H1 (cell line): ENCODE measurements at regions of chr1 and their contacts with region 1.

Region 1: DNA sequence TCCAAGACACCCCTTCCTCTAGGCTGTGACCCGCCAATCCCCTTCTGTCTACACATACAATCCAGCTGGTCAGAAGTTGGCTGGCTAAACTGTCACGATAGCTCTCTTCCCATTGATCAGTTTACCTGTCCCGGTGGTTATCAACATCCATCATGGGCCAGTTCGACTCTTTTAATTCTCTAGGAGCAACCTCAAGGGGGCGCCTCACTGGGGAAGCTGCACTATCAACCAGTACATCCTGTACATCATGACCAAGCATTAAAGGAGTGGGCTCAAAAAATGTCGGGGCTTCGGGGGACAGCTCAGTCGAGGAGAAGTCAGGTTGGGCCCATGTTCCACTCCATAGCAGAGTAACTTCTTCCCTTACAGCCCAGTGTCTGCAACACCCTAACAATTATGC is 53.2 kb upstream of the B3GALNT2 start:
- DNase-seq: peak in 1 of 2 experiments; percentile 83
- H3K4me3 ChIP-seq: no peak overlapping the region
- H3K27ac ChIP-seq: no peak overlapping the region
- H3K4me1 ChIP-seq: no peaks in the 10 kb centered on the region
- H3K27me3 ChIP-seq: no peaks in the 10 kb centered on the region
- CTCF ChIP-seq: peak; percentile 48 to 74 (median 74)
- EP300 ChIP-seq: no peak
- POLR2A ChIP-seq: no peak
- RAD21 ChIP-seq: peak; percentile 42 to 55

Region 2: DNA sequence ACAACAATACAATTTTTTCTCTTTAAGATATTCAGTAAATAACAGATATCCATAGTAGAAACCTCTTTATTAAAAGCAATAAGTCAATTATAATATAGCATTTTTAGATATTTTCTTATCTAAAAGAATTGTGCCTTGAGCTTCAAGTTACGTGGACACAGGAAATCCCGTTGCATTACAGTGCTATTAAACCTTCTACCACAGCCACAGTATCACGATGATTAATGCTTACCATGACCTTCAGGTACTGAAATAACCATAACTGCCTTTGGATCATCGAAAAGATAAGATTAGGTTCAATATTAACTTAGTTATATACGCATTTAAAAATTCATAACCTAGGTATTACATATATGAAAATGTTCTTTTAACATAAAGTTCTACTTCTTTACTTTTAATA is 71.2 kb before region 1 on chr1:
- CTCF ChIA-PET with region 1: no interaction called
- POLR2A ChIA-PET with region 1: no interaction called
- DNase-seq: no peak
- H3K4me3 ChIP-seq: no peak overlapping the region
- H3K27ac ChIP-seq: no peak overlapping the region
- H3K4me1 ChIP-seq: no peaks in the 10 kb centered on the region
- H3K27me3 ChIP-seq: no peaks in the 10 kb centered on the region
- CTCF ChIP-seq: no peak
- EP300 ChIP-seq: no peak
- POLR2A ChIP-seq: no peak
- RAD21 ChIP-seq: no peak

Region 3: DNA sequence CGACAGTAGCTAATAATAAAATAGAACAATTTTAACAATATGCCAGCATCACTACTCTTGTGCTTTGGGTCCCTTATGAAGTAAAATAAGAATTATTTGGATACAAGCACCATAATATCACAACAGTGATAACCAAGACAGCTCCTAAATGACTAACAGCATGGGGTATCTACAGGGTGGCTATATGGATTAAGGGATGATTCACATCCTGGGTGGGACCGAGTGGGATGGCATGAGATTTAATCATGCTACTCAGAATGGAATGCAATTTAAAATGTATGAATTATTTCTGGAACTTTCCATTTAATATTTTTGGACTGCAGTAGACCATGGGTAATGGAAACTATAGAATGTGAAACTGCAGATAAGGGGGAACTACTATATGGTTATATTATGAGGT is 25.1 kb before region 1 on chr1:
- CTCF ChIA-PET with region 1: interaction called, 12 read pairs
- POLR2A ChIA-PET with region 1: interaction called, 4 read pairs
- DNase-seq: no peak
- H3K4me3 ChIP-seq: no peak overlapping the region
- H3K27ac ChIP-seq: no peak overlapping the region
- H3K4me1 ChIP-seq: no peaks in the 10 kb centered on the region
- H3K27me3 ChIP-seq: no peaks in the 10 kb centered on the region; a peak in 1 of 7 replicates
- CTCF ChIP-seq: no peak
- EP300 ChIP-seq: no peak
- POLR2A ChIP-seq: no peak
- RAD21 ChIP-seq: no peak

Region 4: GRCh38 chr1:235545277-235545930 is 12.1 kb before region 1 on chr1:
- CTCF ChIA-PET with region 1: interaction called, 55 read pairs
- POLR2A ChIA-PET with region 1: interaction called, 4 read pairs
- DNase-seq: no peak
- H3K4me3 ChIP-seq: no peak overlapping the region
- H3K27ac ChIP-seq: no peak overlapping the region
- H3K4me1 ChIP-seq: peaks cover 3 to 7% (median 5%) of the 10 kb centered on the region in 4 experiments
- H3K27me3 ChIP-seq: no peaks in the 10 kb centered on the region
- CTCF ChIP-seq: no peak
- EP300 ChIP-seq: no peak
- POLR2A ChIP-seq: no peak
- RAD21 ChIP-seq: no peak

Region 5: DNA sequence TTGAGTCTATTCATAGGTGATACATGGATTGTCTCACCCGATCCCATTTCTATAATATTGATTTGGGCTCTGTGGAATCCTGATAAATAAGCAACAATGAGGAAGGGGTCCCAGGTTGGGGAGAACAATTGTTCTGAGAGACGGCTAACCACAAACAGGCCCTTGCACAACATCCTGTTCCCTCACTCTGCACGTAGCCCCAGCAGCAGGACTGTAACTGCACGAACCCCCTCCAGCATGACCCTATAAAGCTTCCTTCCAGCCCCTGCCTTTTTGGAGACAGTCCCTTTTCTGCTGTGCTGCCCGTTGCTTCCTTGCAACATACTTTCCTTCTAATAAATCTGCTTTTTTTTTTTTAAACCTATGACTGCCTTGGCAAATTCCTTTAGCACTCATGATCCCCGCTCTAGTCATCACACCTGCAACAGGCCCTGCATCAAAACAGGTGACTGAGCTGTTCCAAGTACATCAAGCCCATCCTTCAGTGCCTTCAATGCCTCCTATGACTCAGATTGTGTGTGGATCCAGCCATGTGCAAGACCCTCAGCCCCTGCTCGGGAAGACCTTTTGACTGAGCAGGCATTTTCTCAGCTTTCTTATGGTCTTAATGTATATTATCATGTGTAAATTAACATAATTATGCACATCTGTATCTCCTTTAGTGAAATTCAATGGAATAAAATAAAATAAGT is 10.5 kb after region 1 on chr1:
- CTCF ChIA-PET with region 1: interaction called, 36 read pairs
- POLR2A ChIA-PET with region 1: interaction called, 4 read pairs
- DNase-seq: no peak
- H3K4me3 ChIP-seq: no peak overlapping the region
- H3K27ac ChIP-seq: no peak overlapping the region
- H3K4me1 ChIP-seq: peaks cover 0 to 2% (median 0%) of the 10 kb centered on the region in 4 experiments; a peak in 1 of 7 replicates
- H3K27me3 ChIP-seq: no peaks in the 10 kb centered on the region
- CTCF ChIP-seq: no peak
- EP300 ChIP-seq: no peak
- POLR2A ChIP-seq: no peak
- RAD21 ChIP-seq: no peak

Region 6: GRCh38 chr1:235583511-235584001 is 26.1 kb after region 1 on chr1:
- CTCF ChIA-PET with region 1: interaction called, 26 read pairs
- POLR2A ChIA-PET with region 1: no interaction called
- DNase-seq: no peak
- H3K4me3 ChIP-seq: no peak overlapping the region
- H3K27ac ChIP-seq: no peak overlapping the region
- H3K4me1 ChIP-seq: no peaks in the 10 kb centered on the region
- H3K27me3 ChIP-seq: no peaks in the 10 kb centered on the region
- CTCF ChIP-seq: no peak
- EP300 ChIP-seq: no peak
- POLR2A ChIP-seq: no peak
- RAD21 ChIP-seq: no peak

Region 7: GRCh38 chr1:235734335-235734734 is 176.8 kb after region 1 on chr1:
- CTCF ChIA-PET with region 1: interaction called, 31 read pairs
- POLR2A ChIA-PET with region 1: no interaction called
- DNase-seq: no peak
- H3K4me3 ChIP-seq: no peak overlapping the region
- H3K27ac ChIP-seq: no peak overlapping the region
- H3K4me1 ChIP-seq: no peaks in the 10 kb centered on the region
- H3K27me3 ChIP-seq: no peaks in the 10 kb centered on the region
- CTCF ChIP-seq: no peak
- EP300 ChIP-seq: no peak
- POLR2A ChIP-seq: no peak
- RAD21 ChIP-seq: no peak